A549 (cell line): ENCODE measurements at regions of chr17 and their contacts with region 1.

Region 1: DNA sequence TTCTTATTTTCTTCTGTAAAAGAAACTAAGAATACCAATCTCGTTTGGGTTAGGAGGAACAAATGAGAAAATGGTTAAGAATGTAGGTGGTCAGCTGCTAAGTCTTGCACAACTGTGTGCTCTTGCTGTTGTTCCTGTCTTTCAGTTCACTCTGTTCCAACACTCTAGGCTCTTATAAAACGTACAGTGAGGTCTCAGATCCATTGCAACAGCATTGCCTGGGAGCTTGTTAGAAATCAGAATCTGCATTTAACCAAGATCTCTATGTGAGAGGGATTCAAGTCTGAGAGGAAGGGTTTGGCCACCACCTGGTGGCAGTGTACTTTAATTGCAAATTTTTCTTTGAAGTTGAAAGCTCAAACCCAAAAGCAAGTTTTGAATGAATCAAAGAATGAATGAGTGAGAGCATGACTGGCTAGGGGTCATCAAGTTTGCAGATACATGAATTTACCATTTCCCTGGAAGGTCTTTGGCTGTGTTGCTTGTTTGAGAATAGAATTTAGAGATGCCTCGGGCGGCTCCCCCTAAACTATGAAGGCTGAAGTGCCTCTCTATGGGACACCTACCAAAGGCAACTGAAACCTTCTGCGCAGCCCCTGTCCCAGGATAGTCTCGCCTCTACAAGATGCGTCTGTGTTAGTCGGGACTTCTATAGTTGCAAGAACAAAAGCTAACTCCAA is 2.5 kb downstream of the ALOX15B start:
- DNase-seq: peak; percentile 81
- ATAC-seq: peak; percentile 67 to 76; a peak in 5 of 6 replicates
- H3K4me3 ChIP-seq: no peak overlapping the region
- H3K27ac ChIP-seq: peak overlapping the region in 1 of 2 experiments; percentile 3; a peak in 1 of 6 replicates
- H3K4me1 ChIP-seq: no peaks in the 10 kb centered on the region
- CTCF ChIP-seq: peak; percentile 96
- EP300 ChIP-seq: no peak
- POLR2A ChIP-seq: no peak
- RAD21 ChIP-seq: peak; percentile 94 to 96

Region 2: DNA sequence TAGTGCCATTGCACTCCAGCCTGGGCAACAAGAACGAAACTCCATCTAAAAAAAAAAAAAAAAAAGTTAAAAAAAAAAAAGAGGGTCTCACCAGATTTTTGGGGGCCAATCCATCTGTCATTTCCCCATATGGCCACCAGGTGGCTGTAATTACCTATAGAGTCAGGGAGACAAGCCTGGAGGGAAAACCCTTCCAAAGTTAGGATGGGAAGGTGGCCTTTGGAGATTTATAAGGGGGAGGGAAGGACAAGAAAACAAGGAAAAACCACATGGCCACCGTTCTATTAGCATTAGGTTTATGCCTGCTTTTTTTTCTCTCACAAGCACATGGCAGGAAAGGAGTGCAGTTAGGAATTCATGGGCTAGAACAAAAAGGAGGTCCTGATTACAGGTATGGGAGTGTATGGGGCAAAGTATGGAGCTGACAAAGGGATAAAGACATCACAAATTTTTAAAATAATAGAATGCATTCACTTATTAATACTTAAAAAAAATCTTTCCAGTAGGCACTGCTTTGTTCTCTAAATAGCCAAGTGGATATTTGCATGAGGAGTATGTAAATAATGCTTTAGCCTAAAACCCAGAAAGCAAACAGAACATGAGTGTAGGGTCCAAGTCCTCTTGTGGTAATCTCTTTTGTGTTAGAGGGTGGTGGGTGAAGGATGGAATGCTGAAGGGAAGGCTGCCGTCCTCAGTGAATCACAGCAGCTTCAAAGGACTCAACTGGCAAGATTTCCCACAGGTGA is 178.5 kb before region 1 on chr17:
- CTCF ChIA-PET with region 1: interaction called, 117 read pairs
- POLR2A ChIA-PET with region 1: no interaction called
- DNase-seq: peak; percentile 65 to 66
- ATAC-seq: no peak
- H3K4me3 ChIP-seq: no peak overlapping the region
- H3K27ac ChIP-seq: no peak overlapping the region
- H3K4me1 ChIP-seq: peaks cover 15% of the 10 kb centered on the region
- CTCF ChIP-seq: peak; percentile 96
- EP300 ChIP-seq: no peak
- POLR2A ChIP-seq: no peak
- RAD21 ChIP-seq: peak; percentile 94 to 97

Region 3: DNA sequence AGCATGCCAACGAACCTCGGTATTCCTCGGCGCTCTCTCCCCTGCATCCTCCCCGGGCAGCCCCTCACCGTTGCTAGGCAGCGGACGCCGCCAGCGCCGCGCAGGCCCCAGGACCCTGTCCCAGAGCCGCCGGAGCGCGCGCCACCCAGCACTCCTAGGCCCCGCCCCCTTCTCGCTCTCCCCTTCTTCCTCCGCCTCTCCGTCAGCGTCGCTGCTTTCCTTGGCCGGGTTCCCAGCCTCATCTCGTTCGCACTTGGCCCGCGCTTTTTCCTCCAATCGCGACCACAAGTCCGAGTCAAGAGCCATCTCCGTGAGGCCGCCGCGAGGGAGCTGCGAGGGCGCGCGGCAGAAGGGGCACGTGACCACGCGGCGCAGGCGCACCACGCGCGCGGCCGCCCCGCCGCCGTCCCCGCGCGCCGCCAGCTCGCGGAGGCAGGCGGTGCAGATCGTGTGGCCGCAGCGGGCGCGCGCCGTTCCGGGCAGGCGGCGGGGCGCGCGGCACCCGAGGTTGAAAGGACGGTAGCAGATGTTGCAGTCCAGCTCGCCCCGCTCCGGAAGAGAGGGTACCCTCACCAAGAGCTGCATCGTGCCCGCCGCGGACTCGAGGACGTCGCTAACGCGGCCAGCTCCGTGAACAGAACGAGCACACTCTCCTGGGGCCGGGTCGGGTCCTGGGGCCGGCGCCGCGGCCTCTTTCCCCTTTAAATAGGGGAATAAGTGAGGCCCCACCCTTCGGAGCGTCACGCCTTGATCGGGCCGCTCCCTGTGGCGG is 125.6 kb before region 1 on chr17 and contains the start of gene RNF227:
- CTCF ChIA-PET with region 1: interaction called, 162 read pairs
- POLR2A ChIA-PET with region 1: interaction called, 8 read pairs
- DNase-seq: peak; percentile 62 to 94
- ATAC-seq: peak; percentile 77 to 80
- H3K4me3 ChIP-seq: peak within 1 kb of the TSS; percentile 48
- H3K27ac ChIP-seq: peak within 1 kb of the TSS; percentile 82 to 92
- H3K4me1 ChIP-seq: peaks cover 13% of the 10 kb centered on the region
- CTCF ChIP-seq: no peak
- EP300 ChIP-seq: no peak
- POLR2A ChIP-seq: peak; percentile 86
- RAD21 ChIP-seq: no peak
- polyA plus RNA-seq, gene RNF227: 2.1 and 2.4 TPM in 2 replicates

Region 4: DNA sequence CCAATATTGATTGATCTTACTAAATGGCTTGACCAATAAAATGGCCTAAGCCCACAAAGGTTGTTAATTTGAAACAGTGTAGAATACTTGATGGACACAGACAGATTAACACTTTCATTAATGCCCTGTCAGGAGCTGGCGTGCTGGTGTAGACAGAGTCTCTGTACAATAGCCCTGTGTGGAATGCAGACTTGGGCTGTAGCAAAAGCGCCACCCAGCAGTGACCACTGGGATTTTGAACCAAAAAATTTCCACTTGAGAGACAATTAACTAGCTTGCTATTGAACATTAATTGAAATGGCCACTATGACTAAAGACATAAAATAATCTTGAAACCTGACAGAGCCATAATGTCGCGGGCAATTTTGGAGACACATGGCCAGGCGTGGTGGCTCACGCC is 58.7 kb before region 1 on chr17:
- CTCF ChIA-PET with region 1: interaction called, 54 read pairs
- POLR2A ChIA-PET with region 1: no interaction called
- DNase-seq: no peak
- ATAC-seq: peak in 1 of 2 experiments; percentile 60; a peak in 2 of 6 replicates
- H3K4me3 ChIP-seq: no peak overlapping the region
- H3K27ac ChIP-seq: no peak overlapping the region
- H3K4me1 ChIP-seq: no peaks in the 10 kb centered on the region
- CTCF ChIP-seq: no peak; the same call in 2 of the 3 replicates
- EP300 ChIP-seq: no peak
- POLR2A ChIP-seq: no peak
- RAD21 ChIP-seq: peak in 1 of 2 experiments; percentile 33; a peak in 2 of 5 replicates

Region 5: GRCh38 chr17:8005960-8006730 is 35.2 kb before region 1 on chr17:
- CTCF ChIA-PET with region 1: interaction called, 26 read pairs
- POLR2A ChIA-PET with region 1: no interaction called
- DNase-seq: peak in 1 of 2 experiments; percentile 64
- ATAC-seq: peak in 1 of 2 experiments; percentile 74; a peak in 3 of 6 replicates
- H3K4me3 ChIP-seq: no peak overlapping the region
- H3K27ac ChIP-seq: no peak overlapping the region
- H3K4me1 ChIP-seq: no peaks in the 10 kb centered on the region
- CTCF ChIP-seq: no peak
- EP300 ChIP-seq: no peak
- POLR2A ChIP-seq: no peak
- RAD21 ChIP-seq: no peak

Region 6: DNA sequence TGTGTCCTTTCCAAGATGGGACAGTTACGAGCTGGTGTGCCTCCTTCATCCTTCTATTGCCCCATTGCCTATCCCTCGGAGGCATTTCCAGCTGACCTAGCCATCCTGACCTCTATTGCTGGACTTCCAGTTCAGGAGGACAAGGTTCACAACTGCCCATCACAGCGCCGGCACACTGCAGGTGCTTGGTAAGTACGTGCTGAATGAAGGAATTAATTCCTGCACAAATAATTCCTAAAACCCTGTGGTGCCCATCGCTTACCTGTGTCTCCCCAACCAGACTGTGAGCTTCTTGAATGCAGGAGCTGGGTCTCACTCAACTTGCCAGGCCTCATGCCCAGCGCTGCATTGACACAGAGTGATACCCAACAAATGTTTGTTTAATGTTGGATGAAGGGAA is 10.4 kb after region 1 on chr17:
- CTCF ChIA-PET with region 1: interaction called, 229 read pairs
- POLR2A ChIA-PET with region 1: interaction called, 3 read pairs
- DNase-seq: no peak
- ATAC-seq: no peak
- H3K4me3 ChIP-seq: no peak overlapping the region
- H3K27ac ChIP-seq: no peak overlapping the region
- H3K4me1 ChIP-seq: no peaks in the 10 kb centered on the region
- CTCF ChIP-seq: no peak
- EP300 ChIP-seq: no peak
- POLR2A ChIP-seq: no peak
- RAD21 ChIP-seq: no peak